ENCODE measurements at regions of chr13 and their contacts with region 1.

Region 1: DNA sequence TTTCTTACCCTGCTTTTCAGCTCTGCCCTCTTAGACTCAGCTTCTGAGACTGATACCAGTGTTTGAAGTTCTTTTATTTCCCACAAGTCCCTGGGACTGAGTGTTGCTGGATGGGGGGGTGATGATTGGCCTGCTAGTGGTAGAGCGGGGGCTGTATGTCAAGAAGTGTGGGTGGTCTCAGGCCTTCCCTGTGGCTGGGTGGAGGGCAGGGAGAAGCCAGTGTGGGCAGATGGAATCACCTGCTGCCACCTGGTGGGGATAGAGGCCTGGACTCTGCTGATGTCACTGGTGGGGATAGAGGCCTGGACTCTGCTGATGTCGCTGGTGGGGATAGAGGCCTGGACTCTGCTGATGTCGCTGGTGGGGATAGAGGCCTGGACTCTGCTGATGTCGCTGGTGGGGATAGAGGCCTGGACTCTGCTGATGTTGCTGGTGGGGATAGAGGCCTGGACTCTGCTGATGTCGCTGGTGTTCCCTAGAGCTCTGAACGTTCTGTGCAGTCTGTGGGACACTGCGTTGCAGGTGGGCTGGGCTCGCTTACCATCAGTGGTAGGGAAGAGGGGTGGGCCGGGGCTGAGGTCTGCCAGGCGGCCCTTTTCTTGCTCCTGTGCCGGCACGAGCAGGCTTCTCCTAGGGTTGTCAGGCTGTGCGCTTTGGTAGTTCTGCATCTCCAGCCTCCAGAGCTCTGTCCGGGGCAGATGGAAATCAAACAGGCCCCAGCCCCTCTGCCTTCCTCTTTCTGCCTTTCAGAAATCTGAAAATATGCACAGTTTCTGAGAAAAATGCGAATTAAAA is 101.3 kb downstream of the ARHGEF7 start:
- DNase-seq: peak in 1 of 2 donors; percentile 43
- ATAC-seq: peak; percentile 41 to 63 (median 52)
- H3K4me3 ChIP-seq: no peak overlapping the region
- H3K27ac ChIP-seq: peak overlapping the region in 5 of 10 donors; percentile 10 to 51 (median 23)
- H3K4me1 ChIP-seq: peaks cover 9 to 95% (median 78%) of the 10 kb centered on the region in 9 donors
- H3K27me3 ChIP-seq: no peaks in the 10 kb centered on the region
- CTCF ChIP-seq: peak in 8 of 9 donors; percentile 16 to 62 (median 50)

Region 2: DNA sequence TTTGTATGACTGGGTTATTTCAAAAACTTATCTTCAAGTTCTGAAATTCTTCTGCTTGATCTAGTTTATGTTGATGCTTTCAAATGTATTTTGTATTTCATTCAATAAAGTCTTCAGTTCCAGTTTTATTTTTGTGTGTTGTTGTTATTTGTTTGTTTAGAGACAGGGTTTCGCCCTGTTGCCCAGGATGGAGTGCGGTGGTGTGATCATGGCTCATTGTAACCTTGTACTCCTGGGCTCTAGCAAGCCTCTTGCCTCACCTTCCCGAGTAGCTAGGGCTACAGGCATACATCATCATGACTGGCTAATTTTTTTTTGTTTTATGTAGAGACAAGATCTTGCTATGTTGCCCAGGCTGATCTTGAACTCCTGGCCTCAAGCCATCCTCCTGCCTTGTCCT is 141.5 kb before region 1 on chr13:
- intact Hi-C with region 1: loop called in 1 of 10 experiments (anchors 5 kb)
- DNase-seq: no peak
- ATAC-seq: no peak
- H3K4me3 ChIP-seq: no peak overlapping the region
- H3K27ac ChIP-seq: no peak overlapping the region
- H3K4me1 ChIP-seq: no peaks in the 10 kb centered on the region
- H3K27me3 ChIP-seq: peaks cover 0 to 6% (median 0%) of the 10 kb centered on the region in 7 donors
- CTCF ChIP-seq: no peak

Region 3: DNA sequence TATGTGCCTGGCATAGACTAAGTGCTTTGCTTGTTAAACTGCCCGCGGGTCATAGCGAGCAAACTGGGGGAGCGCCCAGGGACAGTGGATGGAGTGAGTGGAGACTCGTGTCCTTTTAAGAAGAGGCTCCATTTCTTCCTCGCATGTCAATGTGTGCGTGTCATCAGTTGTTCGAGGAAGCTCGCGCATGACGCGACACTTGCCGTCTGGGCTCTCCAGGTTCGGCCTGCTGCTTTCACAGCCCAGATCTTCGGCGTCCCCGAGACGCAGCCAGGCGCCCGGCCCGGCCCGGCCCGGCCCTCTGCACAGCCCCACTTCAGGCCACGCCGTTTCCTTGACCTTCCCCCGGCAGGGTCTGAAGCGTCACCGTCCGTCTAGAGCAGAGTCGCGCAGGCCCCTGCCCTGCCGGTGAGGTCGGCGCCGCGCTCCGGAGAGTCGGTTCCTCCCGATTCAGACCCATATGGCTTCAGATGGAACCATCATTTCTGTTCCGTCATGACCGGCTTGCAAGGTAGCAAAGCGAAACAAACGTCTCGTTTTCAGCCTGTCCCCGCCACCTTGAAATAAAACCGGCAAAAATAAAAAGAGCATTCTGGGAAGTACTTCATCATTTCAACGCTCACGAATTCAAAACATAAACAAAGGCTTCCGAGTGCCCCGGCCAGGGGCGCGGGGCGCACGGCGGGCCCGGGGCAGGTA is 101.9 kb before region 1 on chr13:
- intact Hi-C with region 1: loop called in 2 of 10 experiments (anchors 5 kb)
- DNase-seq: peak; percentile 41 to 60
- ATAC-seq: peak; percentile 59 to 73 (median 70)
- H3K4me3 ChIP-seq: peak overlapping the region; percentile 22 to 72 (median 64)
- H3K27ac ChIP-seq: peak overlapping the region; percentile 61 to 92 (median 76)
- H3K4me1 ChIP-seq: peaks cover 0 to 44% (median 17%) of the 10 kb centered on the region in 9 donors
- H3K27me3 ChIP-seq: peaks cover 0 to 85% (median 38%) of the 10 kb centered on the region in 7 donors
- CTCF ChIP-seq: no peak

Region 4: DNA sequence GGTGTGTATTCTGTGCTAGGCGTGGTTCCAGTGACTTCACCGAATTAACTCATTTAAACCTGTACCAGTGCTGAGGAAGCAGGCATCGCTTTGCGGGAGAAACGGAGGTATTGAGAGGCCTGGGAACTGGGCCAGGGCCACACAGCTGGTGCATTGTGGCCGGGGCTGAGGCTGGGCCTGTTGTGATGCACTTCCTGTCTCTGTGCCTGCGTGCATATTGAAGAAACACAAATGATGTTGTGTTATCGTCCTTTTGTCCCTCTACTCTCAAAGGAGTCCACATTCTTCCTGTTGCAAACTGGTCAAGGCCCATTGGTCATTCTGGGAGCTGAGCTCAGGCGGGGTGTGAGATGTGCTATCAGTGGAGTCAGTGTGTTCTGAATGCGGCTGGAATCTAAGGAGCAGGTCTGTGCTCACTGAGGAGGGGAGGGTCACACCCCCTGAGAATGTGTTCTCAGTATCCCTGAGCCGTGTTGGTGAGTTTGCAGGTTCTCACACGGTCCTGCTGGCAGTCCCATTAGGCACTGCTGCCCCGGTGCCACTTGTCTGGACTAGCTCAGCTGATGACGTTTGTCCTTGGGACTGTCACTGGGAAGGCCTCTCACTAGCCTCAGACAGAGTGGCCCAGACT is 39.2 kb before region 1 on chr13:
- intact Hi-C with region 1: loop called in 2 of 10 experiments (anchors 5 kb)
- DNase-seq: peak; percentile 64 to 77
- ATAC-seq: peak; percentile 77 to 90 (median 84)
- H3K4me3 ChIP-seq: peak overlapping the region in 1 of 10 donors; percentile 2
- H3K27ac ChIP-seq: peak overlapping the region; percentile 64 to 95 (median 87)
- H3K4me1 ChIP-seq: peaks cover 12 to 68% (median 58%) of the 10 kb centered on the region in 9 donors
- H3K27me3 ChIP-seq: no peaks in the 10 kb centered on the region
- CTCF ChIP-seq: no peak